Psoas muscle (tissue), 8 donors: ENCODE measurements at regions of chr4 and their contacts with region 1.

Region 1: DNA sequence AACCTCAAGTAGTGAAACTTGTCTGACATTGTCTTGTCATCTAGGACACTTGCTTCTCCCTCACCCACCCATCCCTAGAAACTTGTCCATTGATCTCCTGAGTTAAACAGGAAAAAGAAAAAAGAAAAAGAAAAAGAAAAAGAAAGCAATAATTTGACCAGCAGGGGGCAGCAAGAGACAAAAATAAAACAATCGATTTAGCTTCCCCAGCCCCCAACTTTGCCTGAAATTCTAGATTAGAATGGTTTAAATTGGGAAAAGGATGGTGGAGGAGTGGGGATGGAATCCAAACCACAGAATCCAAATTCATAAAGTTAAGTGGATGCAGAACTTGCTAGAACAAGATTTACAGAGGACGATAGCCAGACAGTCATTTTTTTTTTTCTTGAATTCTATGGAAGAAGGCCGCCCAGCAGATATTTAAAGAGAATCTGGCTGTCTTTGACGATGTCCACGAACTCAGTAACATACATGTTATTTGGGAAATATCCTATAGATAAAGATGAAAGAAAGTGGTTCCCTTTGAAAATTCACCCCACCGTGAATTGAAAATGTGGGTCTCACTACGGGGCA is 282.9 kb downstream of the USP46 start:
- DNase-seq: no peak
- ATAC-seq: no peak
- H3K4me3 ChIP-seq: no peak overlapping the region
- H3K27ac ChIP-seq: no peak overlapping the region
- H3K4me1 ChIP-seq: no peaks in the 10 kb centered on the region
- H3K27me3 ChIP-seq: no peaks in the 10 kb centered on the region
- CTCF ChIP-seq: peak; percentile 63

Region 2: GRCh38 chr4:54233277-54233696 is 1857.1 kb after region 1 on chr4:
- intact Hi-C with region 1: loop called in 1 of 2 experiments (anchors 10 kb)
- DNase-seq: peak; percentile 88 to 92
- ATAC-seq: peak; percentile 91 to 94 (median 94)
- H3K4me3 ChIP-seq: peak overlapping the region; percentile 70
- H3K27ac ChIP-seq: no peak overlapping the region
- H3K4me1 ChIP-seq: peaks cover 28% of the 10 kb centered on the region
- H3K27me3 ChIP-seq: peaks cover 0 to 47% (median 27%) of the 10 kb centered on the region in 3 donors
- CTCF ChIP-seq: peak; percentile 82